ENCODE measurements at regions of chr5 and their contacts with region 1.

Region 1: DNA sequence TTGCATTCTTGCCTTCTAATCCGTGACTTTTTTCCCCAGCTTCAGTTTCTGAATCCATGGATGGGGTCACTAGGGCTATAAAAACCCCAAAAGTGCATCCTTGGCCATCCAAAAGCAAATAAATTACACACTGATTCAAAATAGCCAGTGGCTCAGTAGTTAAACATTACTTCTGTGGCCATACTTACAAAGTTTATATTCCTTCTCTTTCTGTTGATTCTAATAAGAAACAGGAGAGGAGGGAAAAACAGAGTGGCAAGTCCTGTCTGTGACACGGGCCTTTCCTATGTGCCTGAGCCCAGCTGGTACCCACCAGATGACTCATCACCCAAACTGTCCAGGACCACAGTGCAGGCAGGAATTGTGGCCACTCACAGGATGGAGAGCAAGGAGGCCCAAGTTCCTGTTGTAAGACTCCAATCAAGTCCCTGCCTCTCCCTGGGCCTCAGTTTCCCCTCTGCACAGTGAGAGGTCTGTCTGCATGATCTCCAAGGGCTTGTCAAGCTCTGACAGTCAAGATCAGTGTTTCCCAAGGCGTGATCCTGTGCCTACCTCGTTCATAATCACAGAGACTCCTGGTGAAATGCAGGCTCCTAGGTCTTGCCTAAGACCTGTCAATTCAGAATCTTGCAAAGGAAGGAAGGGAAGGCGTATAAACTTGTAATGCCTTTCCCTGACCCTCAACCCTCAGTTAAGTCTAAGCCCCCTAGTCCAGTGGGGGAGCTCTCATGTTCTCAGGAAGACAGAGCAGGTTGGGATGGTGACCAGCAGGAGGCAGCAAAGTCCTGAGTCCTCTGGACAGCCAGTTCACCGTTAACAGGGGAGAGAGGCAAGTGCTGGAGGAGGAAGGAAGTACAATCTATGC is 29.5 kb downstream of the TNIP1 start:
- DNase-seq: peak; percentile 82
- ATAC-seq: peak; percentile 84
- H3K4me3 Mint-ChIP-seq: no peak overlapping the region
- H3K27ac Mint-ChIP-seq: no peak overlapping the region
- H3K4me1 Mint-ChIP-seq: peaks cover 5% of the 10 kb centered on the region
- H3K27me3 Mint-ChIP-seq: no peaks in the 10 kb centered on the region

Region 2: DNA sequence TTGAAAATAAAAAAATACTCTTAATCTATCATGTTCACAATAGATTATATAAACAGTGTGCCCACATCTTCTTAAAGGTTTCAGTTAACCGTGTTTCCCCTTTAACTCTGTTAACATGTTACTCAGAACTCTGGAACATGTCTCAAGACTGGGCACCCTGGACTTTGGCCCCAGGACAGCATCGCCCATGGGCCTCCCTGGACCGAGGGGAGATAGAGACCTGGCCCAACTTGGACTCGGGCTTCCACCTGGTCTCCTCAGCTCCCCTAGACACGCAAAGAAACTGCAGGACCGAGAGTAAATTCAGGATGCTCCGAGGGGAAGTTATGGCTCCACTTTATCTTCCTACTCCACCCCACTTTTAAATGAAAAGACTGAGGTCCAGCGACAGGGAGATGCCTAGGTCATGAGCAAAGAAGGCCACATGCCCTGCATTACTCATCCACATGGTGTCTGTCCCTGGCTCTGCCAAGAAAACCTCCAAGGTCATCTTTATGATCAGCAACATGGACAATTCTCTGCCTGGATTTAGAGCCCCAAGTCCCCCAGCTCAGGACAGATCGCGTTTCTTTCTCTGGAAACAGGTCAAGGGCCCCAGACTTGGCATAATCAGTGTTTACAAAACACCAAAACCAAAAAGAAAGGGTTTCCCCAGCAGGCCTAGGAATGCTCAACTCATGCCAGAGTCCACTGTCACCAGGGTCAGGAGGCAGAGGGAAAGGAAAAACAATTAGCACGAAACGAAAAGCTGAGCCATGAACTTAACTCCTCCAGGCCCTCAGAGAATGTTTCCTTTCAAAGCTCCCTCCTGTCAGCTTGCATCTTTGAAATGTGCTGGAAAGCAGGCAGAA is 13.5 kb before region 1 on chr5:
- CTCF ChIA-PET with region 1: interaction called, 49 read pairs
- POLR2A ChIA-PET with region 1: no interaction called
- intact Hi-C with region 1: no loop called
- DNase-seq: peak; percentile 0
- ATAC-seq: no peak
- H3K4me3 Mint-ChIP-seq: no peak overlapping the region
- H3K27ac Mint-ChIP-seq: no peak overlapping the region
- H3K4me1 Mint-ChIP-seq: peaks cover 19% of the 10 kb centered on the region
- H3K27me3 Mint-ChIP-seq: no peaks in the 10 kb centered on the region

Region 3: GRCh38 chr5:151063142-151063949 is 12.0 kb after region 1 on chr5:
- CTCF ChIA-PET with region 1: interaction called, 19 read pairs
- POLR2A ChIA-PET with region 1: no interaction called
- intact Hi-C with region 1: no loop called
- DNase-seq: no peak
- ATAC-seq: no peak
- H3K4me3 Mint-ChIP-seq: no peak overlapping the region
- H3K27ac Mint-ChIP-seq: peak overlapping the region; percentile 87
- H3K4me1 Mint-ChIP-seq: peaks cover 96% of the 10 kb centered on the region
- H3K27me3 Mint-ChIP-seq: no peaks in the 10 kb centered on the region

Region 4: DNA sequence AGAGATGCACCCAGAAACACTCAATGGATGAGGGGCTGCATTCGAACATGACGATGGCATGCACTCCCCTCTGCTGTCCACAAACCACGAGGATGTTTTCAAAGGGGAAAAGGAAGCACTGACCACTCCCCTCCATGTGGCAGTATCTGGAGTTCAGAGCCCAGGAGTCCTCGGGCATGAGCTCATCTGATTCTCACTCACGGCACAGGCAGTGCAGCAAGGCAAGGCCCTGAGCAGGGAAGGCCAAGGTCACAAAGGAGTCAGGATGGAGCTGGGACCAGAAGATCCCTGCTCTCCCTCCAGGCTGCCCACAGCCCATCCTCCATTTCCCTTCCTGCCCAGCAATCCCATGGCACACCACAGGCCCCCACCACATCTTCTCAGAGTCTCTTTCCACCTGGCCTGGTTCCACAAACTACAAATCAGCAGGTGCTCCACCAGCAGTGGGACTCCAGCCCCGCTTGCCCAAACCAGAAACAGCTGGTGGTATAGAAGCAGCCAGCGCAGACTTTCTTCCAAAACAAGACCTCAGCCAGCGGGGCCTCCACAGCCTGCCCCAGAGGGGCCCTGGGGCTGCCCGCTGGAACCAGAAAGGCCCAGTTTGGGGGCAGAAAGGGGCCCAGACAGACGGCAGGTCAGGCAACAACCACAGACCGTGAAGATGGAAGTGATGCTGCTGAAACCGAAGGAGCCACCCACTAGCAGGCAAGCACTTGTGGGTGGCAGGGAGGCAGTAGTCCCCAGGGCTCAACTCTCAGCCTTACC is 17.3 kb after region 1 on chr5:
- CTCF ChIA-PET with region 1: interaction called, 19 read pairs
- POLR2A ChIA-PET with region 1: no interaction called
- intact Hi-C with region 1: no loop called
- DNase-seq: peak; percentile 75
- ATAC-seq: peak; percentile 60
- H3K4me3 Mint-ChIP-seq: peak overlapping the region; percentile 48
- H3K27ac Mint-ChIP-seq: peak overlapping the region; percentile 91
- H3K4me1 Mint-ChIP-seq: peaks cover 97% of the 10 kb centered on the region
- H3K27me3 Mint-ChIP-seq: no peaks in the 10 kb centered on the region

Region 5: GRCh38 chr5:151086905-151087360 is 35.6 kb after region 1 on chr5:
- CTCF ChIA-PET with region 1: interaction called, 11 read pairs
- POLR2A ChIA-PET with region 1: no interaction called
- intact Hi-C with region 1: loop called in 1 of 2 experiments (anchors 5 kb)
- DNase-seq: peak; percentile 85
- ATAC-seq: peak; percentile 78
- H3K4me3 Mint-ChIP-seq: peak overlapping the region; percentile 80
- H3K27ac Mint-ChIP-seq: peak overlapping the region; percentile 86
- H3K4me1 Mint-ChIP-seq: peaks cover 57% of the 10 kb centered on the region
- H3K27me3 Mint-ChIP-seq: no peaks in the 10 kb centered on the region

Measured in activated CD4-positive, alpha-beta T cell treated with anti-CD3 and anti-CD28 coated beads for 36 hours (primary cell).